K562 (cell line): ENCODE measurements at regions of chr14 and their contacts with region 1.

Region 1: GRCh38 chr14:69652942-69653684 is 41.7 kb downstream of the SUSD6 start:
- DNase-seq: peak in 2 of 4 experiments; percentile 23 to 62
- ATAC-seq: peak; percentile 54
- H3K4me3 ChIP-seq: peak overlapping the region; percentile 11; the same call in 1 of the 2 replicates
- H3K27ac ChIP-seq: peak overlapping the region; percentile 80
- H3K4me1 ChIP-seq: peaks cover 18 to 68% of the 10 kb centered on the region in 2 experiments
- H3K27me3 ChIP-seq: no peaks in the 10 kb centered on the region
- CTCF ChIP-seq: no peak
- EP300 ChIP-seq: no peak
- POLR2A ChIP-seq: no peak
- RAD21 ChIP-seq: no peak

Region 2: DNA sequence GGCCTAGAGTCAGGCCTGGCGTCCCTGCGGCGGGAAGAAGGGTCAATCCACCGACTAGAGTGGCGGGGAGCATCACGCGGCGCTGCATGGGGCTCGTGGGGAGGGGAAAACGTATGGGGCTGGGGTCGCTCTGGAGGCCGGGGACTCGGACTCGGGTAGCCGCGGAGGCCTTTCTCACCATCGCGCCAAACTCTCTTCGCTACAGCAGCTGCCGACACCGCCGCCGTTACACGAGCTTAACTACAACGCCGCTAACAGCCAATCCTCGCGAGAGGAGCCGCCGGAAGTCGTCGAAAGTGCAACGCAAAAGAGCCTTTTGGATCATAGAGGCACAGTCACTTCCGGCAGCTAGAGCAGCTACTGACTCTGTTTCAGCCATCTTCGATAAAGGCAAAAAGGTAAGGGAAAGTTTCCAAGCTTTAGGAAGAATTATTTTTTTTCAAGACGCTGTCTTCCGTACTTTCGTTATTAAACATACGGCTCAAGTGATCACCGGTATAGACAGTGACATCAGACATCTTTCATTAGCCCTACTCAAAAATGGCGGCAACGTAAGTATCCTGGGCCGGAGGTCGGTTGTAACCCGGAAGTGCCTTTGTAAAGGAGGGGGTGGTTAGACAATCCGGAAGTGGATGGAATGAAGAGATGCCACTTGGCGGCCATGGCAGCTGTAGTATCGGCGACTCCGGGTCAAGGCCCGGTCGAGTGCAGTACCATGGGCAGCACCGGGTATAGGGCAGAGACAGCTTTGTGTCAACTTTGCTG is 254.9 kb before region 1 on chr14 and contains the starts of genes ERH and SLC39A9:
- CTCF ChIA-PET with region 1: no interaction called
- POLR2A ChIA-PET with region 1: no interaction called
- in situ Hi-C with region 1: no loop called
- intact Hi-C with region 1: no loop called
- DNase-seq: peak; percentile 75 to 94 (median 84)
- ATAC-seq: peak; percentile 87
- H3K4me3 ChIP-seq: peak within 1 kb of the TSS; percentile 81
- H3K27ac ChIP-seq: peak within 1 kb of the TSS; percentile 95
- H3K4me1 ChIP-seq: peaks cover 0 to 10% of the 10 kb centered on the region in 2 experiments; a peak in 4 of 5 replicates
- H3K27me3 ChIP-seq: no peaks in the 10 kb centered on the region
- CTCF ChIP-seq: 0 out of 6 replicates have a peak, but pooled peaks of 1 of the 3 experiments have one; percentile 12
- EP300 ChIP-seq: peak; percentile 46
- POLR2A ChIP-seq: peak; percentile 85
- RAD21 ChIP-seq: no peak
- polyA plus RNA-seq, gene ERH: 292 to 474 TPM
- polyA plus RNA-seq, gene SLC39A9: 18.4 to 24.0 TPM

Region 3: DNA sequence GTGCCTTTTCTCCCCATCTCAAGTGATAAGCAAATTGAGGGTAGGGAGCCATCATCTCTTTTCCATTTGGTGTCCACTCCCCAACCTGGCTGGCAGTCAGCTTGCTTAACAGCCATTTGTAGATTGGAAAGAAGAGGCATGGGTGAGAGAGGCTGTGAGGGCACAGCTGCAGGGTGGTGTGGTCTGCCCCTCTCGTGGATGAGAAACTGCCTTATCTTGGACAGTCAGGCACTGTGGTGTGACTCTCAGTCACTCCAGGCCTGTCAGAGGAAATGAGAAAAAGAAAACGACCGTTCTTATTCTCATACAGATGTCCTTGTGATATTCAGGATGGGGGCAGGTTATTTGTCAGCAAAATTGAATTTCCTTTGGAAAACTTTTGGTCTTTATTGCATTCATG is 48.7 kb after region 1 on chr14:
- CTCF ChIA-PET with region 1: no interaction called
- POLR2A ChIA-PET with region 1: no interaction called
- in situ Hi-C with region 1: no loop called
- intact Hi-C with region 1: loop called (anchors 5 kb)
- DNase-seq: peak in 2 of 4 experiments; percentile 67 to 81
- ATAC-seq: peak; percentile 83
- H3K4me3 ChIP-seq: no peak overlapping the region; the same call in 1 of the 2 replicates
- H3K27ac ChIP-seq: peak overlapping the region; percentile 97
- H3K4me1 ChIP-seq: peaks cover 16 to 59% of the 10 kb centered on the region in 2 experiments; a peak in 3 of 5 replicates
- H3K27me3 ChIP-seq: no peaks in the 10 kb centered on the region
- CTCF ChIP-seq: no peak
- EP300 ChIP-seq: peak; percentile 91; the same call in 1 of the 2 replicates
- POLR2A ChIP-seq: no peak
- RAD21 ChIP-seq: no peak